Heart left ventricle (tissue), 16 donors: ENCODE measurements at regions of chr13 and their contacts with region 1.

Region 1: GRCh38 chr13:76016799-76017400 is 380.8 kb downstream of the LMO7 start:
- DNase-seq: no peak
- ATAC-seq: peak in 1 of 4 donors; percentile 46
- H3K4me3 ChIP-seq: no peak overlapping the region
- H3K27ac ChIP-seq: no peak overlapping the region
- H3K4me1 ChIP-seq: peaks cover 0 to 21% (median 8%) of the 10 kb centered on the region in 12 donors
- H3K27me3 ChIP-seq: no peaks in the 10 kb centered on the region
- CTCF ChIP-seq: peak in 11 of 12 donors; percentile 17 to 53 (median 33)
- POLR2A ChIP-seq: no peak

Region 2: GRCh38 chr13:75896271-75896670 is 120.6 kb before region 1 on chr13:
- intact Hi-C with region 1: loop called in 2 of 10 experiments (anchors 5 to 10 kb)
- DNase-seq: no peak
- ATAC-seq: no peak
- H3K4me3 ChIP-seq: no peak overlapping the region
- H3K27ac ChIP-seq: no peak overlapping the region
- H3K4me1 ChIP-seq: no peaks in the 10 kb centered on the region
- H3K27me3 ChIP-seq: no peaks in the 10 kb centered on the region
- CTCF ChIP-seq: no peak
- POLR2A ChIP-seq: no peak

Region 3: GRCh38 chr13:75908141-75908540 is 108.8 kb before region 1 on chr13:
- intact Hi-C with region 1: loop called in 2 of 10 experiments (anchors 5 to 10 kb)
- DNase-seq: peak; percentile 23 to 69 (median 39)
- ATAC-seq: peak; percentile 59 to 89 (median 80)
- H3K4me3 ChIP-seq: no peak overlapping the region
- H3K27ac ChIP-seq: no peak overlapping the region
- H3K4me1 ChIP-seq: peaks cover 0 to 8% (median 0%) of the 10 kb centered on the region in 12 donors
- H3K27me3 ChIP-seq: no peaks in the 10 kb centered on the region
- CTCF ChIP-seq: no peak
- POLR2A ChIP-seq: no peak